ENCODE measurements at regions of chr4 and their contacts with region 1.

Region 1: DNA sequence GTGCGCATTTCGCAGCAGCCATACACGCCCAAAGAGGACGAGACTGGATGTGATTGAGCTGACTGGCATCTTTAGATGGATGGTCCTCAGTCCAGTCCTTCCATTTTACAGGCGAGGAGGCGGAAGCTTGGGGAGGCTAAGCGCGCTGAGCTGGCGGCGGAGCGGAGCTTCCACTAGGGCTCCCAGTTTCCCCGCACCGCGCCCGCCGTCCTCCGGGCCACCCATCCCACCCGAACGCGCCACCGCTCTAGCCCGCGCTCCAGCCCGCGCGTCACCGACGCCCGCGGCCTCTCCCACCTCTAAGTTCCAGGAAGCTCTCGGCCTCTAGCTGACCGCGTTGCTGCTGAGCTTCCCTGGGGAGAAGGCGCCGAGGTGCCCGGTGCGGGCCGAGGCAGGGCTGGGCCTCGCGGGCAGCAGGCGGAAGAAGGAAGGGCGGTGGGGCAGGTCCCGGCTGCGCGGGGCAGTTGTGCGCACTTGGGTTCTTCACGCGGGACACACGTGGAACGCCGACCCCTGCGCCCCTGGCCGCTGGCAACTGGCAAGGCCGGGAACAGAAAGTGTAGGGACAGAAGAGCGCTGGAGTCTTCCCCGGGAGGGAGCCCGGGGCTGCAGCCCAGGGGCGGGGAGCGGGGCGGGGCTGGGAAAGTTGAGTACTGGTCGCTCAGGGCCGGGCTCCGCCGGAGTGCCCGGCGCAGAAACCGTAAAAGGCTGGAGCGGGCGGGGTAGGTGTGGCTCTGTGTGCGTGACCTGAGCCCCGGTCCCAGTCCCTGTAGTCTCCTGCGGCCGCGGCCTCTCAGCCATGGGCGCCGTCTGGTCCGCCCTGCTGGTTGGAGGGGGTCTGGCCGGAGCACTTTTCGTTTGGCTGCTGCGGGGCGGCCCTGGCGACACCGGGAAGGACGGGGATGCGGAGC is at the start of gene STBD1:
- DNase-seq: peak; percentile 74 to 85
- ATAC-seq: peak; percentile 85 to 94 (median 88)
- H3K4me3 ChIP-seq: peak within 1 kb of the TSS; percentile 57 to 90 (median 76)
- H3K27ac ChIP-seq: peak within 1 kb of the TSS; percentile 69 to 97 (median 91)
- H3K4me1 ChIP-seq: peaks cover 0 to 56% (median 37%) of the 10 kb centered on the region in 9 donors
- H3K27me3 ChIP-seq: peaks cover 0 to 7% (median 0%) of the 10 kb centered on the region in 7 donors
- CTCF ChIP-seq: peak in 2 of 9 donors; percentile 8 to 21
- total RNA-seq, gene STBD1: 14.8 to 53.7 (median 22.6) TPM

Region 2: DNA sequence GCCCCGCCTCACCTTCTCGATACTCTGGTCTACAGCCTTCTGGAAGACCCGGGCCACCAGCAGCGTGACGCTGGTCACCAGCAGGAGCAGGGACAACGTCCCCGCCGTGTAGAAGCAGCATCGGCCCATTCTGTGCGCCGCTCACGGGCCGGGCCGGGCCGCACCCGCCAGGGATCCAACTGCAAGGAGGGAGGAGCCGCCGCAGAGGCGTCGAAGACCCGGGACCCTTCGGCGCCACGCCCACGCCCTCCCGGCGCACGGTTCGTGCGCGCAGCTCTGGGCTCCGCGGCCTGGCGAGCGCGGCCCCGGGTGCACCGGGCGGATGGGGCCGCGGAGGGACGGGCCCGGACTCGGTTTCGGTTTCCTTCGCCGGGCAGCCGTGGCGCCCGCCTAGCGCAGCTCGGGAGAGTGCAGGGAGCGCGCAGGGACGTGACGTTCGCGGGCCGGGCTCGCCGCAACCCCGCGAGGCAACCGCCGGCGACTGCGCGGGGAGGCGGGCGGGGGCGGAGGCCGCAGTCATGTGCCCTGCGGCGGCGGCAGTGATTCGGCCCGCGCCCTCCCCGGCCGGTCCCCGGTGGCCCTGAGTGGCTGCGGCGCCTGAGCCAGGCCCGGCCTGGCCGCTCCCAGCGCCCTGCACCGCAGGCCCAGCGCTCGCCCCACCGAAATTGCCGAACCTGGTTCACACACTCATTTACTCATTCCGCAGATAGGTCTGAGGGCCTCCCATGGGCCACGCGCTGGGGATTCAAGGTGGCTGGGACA is 92.6 kb before region 1 on chr4 and contains the start of gene SCARB2:
- intact Hi-C with region 1: loop called in 1 of 10 experiments (anchors 10 kb)
- DNase-seq: peak; percentile 88 to 92
- ATAC-seq: peak; percentile 92 to 97 (median 96)
- H3K4me3 ChIP-seq: peak within 1 kb of the TSS; percentile 50 to 95 (median 84)
- H3K27ac ChIP-seq: peak within 1 kb of the TSS; percentile 93 to 98 (median 96)
- H3K4me1 ChIP-seq: peaks cover 16 to 77% (median 54%) of the 10 kb centered on the region in 9 donors
- H3K27me3 ChIP-seq: no peaks in the 10 kb centered on the region
- CTCF ChIP-seq: no peak
- total RNA-seq, gene SCARB2: 76.6 to 199 (median 94.9) TPM

Region 3: GRCh38 chr4:76251441-76252270 is 54.6 kb before region 1 on chr4 and contains the start of gene FAM47E:
- intact Hi-C with region 1: loop called in 1 of 10 experiments (anchors 2 kb)
- DNase-seq: peak; percentile 72 to 78
- ATAC-seq: peak; percentile 95 to 99 (median 98)
- H3K4me3 ChIP-seq: peak within 1 kb of the TSS; percentile 16 to 77 (median 66)
- H3K27ac ChIP-seq: peak within 1 kb of the TSS in 6 of 10 donors; percentile 1 to 54 (median 46)
- H3K4me1 ChIP-seq: peaks cover 0 to 15% (median 7%) of the 10 kb centered on the region in 9 donors
- H3K27me3 ChIP-seq: peaks cover 0 to 62% (median 17%) of the 10 kb centered on the region in 7 donors
- CTCF ChIP-seq: peak in 8 of 9 donors; percentile 24 to 61 (median 47)
- total RNA-seq, gene FAM47E: 2.1 to 6.3 (median 3.1) TPM

Region 4: GRCh38 chr4:76341063-76341462 is 34.8 kb after region 1 on chr4:
- intact Hi-C with region 1: loop called in 1 of 10 experiments (anchors 5 kb)
- DNase-seq: no peak
- ATAC-seq: peak in 7 of 8 donors; percentile 49 to 97 (median 83)
- H3K4me3 ChIP-seq: no peak overlapping the region
- H3K27ac ChIP-seq: peak overlapping the region in 4 of 10 donors; percentile 30 to 65 (median 40)
- H3K4me1 ChIP-seq: peaks cover 0 to 20% (median 4%) of the 10 kb centered on the region in 9 donors
- H3K27me3 ChIP-seq: no peaks in the 10 kb centered on the region
- CTCF ChIP-seq: no peak

Region 5: DNA sequence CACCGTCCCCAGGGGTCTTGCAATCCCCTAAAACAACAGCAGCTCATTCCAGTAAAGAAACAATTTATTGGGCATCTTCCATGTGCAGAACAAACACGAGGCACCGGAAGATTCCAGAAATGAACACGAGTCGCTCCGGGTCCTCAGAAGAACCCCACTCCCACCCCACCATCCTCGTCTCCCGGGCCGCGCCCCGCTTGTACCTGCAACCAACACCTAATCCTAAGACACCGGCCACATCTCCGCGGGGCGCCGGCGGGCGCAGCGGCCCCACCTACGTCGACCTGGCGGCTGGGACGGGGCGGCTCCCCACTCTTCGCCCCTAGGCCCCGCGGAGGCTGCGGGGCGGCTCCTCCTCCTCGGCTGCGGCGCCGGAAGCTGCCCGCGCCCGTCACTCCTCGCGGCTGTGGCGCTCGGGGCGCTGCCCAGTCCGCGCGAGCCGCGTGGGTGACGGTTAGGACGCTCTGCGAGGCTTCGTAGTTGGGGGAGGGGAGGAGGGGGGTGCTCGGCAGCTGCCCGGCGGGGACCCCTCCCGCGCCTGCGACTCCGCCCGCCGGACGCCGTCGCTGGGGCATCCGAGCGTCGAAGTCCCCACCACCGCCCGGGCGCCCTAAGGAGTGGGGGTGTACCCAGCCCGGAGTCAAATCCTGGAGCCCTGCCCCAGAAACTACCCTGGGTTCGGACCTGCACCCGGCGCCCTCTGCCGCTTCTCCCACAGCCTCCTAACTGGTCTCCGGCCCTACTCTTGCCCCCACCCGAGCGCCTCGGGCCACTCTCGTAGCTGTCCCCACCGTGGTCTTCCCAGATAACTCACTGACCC is 114.7 kb after region 1 on chr4 and contains the start of gene CCDC158:
- intact Hi-C with region 1: loop called in 1 of 10 experiments (anchors 5 kb)
- DNase-seq: peak; percentile 5 to 33
- ATAC-seq: peak; percentile 58 to 91 (median 80)
- H3K4me3 ChIP-seq: peak within 1 kb of the TSS; percentile 35 to 67 (median 56)
- H3K27ac ChIP-seq: peak within 1 kb of the TSS in 2 of 10 donors; percentile 10 to 22
- H3K4me1 ChIP-seq: peaks cover 0 to 12% (median under 1%) of the 10 kb centered on the region in 9 donors
- H3K27me3 ChIP-seq: peaks cover 0 to 18% (median 0%) of the 10 kb centered on the region in 7 donors
- CTCF ChIP-seq: no peak
- total RNA-seq, gene CCDC158: 0.15 to 1.0 (median 0.39) TPM

Region 6: DNA sequence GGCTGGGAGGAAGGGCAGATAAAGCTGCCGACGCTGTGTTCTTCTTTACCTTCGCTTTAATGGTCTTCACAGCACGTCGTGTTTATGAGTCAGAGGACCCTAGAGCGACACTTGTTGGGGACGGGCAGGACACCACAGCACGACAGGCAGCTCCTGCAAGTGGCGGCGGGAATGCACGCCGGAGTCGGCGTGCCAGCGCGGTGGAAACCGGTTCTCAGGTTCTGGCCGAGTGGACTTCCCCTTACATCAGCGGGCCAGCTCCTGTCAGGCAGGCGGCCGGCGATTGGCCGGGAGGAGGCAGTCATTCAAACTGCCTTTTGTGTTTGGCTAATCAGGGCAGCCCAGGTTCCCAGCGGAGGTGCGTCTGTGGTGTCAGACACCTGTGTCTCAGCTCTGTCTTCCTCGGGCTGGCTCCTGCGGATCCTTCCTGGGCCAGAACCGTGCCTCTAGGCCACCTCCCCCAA is 279.7 kb after region 1 on chr4:
- intact Hi-C with region 1: loop called in 1 of 10 experiments (anchors 10 kb)
- DNase-seq: peak; percentile 74 to 77
- ATAC-seq: peak; percentile 68 to 93 (median 89)
- H3K4me3 ChIP-seq: peak overlapping the region in 9 of 10 donors; percentile 27 to 56 (median 51)
- H3K27ac ChIP-seq: peak overlapping the region; percentile 55 to 88 (median 76)
- H3K4me1 ChIP-seq: peaks cover 0 to 41% (median 16%) of the 10 kb centered on the region in 9 donors
- H3K27me3 ChIP-seq: peaks cover 0 to 36% (median 0%) of the 10 kb centered on the region in 7 donors
- CTCF ChIP-seq: peak in 7 of 9 donors; percentile 19 to 54 (median 38)